Mammary epithelial cell (primary cell): ENCODE measurements at regions of chr5 and their contacts with region 1.

Region 1: DNA sequence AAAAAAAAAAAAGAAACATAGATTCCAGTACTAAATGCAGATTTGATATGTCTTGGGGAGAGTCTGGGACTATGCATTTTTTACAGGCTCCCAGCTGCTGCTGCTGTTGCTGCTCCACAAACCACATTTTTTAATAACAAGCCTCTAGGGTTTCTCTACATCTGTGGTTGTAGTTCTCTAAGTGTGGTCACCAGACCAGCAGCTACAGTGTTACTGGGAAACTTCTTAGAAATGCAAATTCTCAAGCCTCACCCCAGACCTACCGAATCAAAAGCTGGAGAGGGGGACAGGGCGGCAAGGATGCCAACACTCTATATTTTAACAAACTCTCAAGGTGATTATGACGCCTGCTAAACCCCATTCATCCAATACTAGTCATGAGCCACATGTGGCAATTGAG is 293.4 kb upstream of the PTGER4 start:
- DNase-seq: peak; percentile 26
- H3K4me3 ChIP-seq: no peak overlapping the region
- H3K27ac ChIP-seq: no peak overlapping the region
- H3K4me1 ChIP-seq: peaks cover 49% of the 10 kb centered on the region
- H3K27me3 ChIP-seq: no peaks in the 10 kb centered on the region
- CTCF ChIP-seq: no peak

Region 2: GRCh38 chr5:39948867-39949468 is 437.3 kb before region 1 on chr5:
- CTCF ChIA-PET with region 1: no interaction called
- dilution Hi-C with region 1: no loop called
- in situ Hi-C with region 1: no loop called
- intact Hi-C with region 1: loop called (anchors 10 kb)
- DNase-seq: peak; percentile 50
- H3K4me3 ChIP-seq: no peak overlapping the region
- H3K27ac ChIP-seq: no peak overlapping the region
- H3K4me1 ChIP-seq: no peaks in the 10 kb centered on the region
- H3K27me3 ChIP-seq: no peaks in the 10 kb centered on the region
- CTCF ChIP-seq: peak; percentile 62 to 67

Region 3: GRCh38 chr5:40428126-40428525 is 41.8 kb after region 1 on chr5:
- CTCF ChIA-PET with region 1: no interaction called
- dilution Hi-C with region 1: loop called (anchors 5 kb)
- in situ Hi-C with region 1: no loop called
- intact Hi-C with region 1: loop called (anchors 5 kb)
- DNase-seq: peak; percentile 70
- H3K4me3 ChIP-seq: no peak overlapping the region
- H3K27ac ChIP-seq: no peak overlapping the region
- H3K4me1 ChIP-seq: peaks cover 28% of the 10 kb centered on the region
- H3K27me3 ChIP-seq: no peaks in the 10 kb centered on the region
- CTCF ChIP-seq: no peak

Region 4: DNA sequence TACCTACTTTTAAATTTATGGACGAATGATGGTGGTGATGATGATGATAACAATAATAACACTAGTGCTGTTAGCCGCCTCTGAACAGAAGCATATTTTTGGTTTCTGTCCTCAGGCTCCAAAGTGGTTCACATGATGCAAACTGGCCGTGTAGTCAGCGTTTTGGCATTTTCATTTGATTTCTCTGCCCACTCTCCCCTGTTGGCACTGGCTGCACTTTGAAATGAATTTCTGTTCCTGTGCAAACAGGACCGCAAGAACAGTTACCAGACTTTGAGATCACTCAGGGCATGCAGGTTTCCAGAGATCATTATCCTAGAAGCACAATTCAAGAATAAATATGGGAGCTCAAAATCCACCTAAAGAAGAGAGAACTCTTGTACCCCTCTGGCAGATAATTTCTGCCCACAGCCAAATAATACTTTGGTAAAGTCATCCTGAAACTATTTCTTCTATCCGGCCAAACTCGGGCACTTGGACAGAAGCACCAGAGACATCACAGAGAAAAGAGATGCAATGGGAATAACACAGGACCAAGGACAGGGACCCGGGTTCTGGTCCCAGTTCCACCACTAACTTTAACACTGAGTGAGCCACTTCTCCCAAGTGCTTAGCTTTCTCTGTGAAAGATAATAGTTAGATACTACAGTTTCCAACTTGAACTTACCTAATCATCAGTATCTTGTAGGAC is 91.7 kb after region 1 on chr5:
- CTCF ChIA-PET with region 1: no interaction called
- dilution Hi-C with region 1: no loop called
- in situ Hi-C with region 1: no loop called
- intact Hi-C with region 1: loop called (anchors 1 kb)
- DNase-seq: peak; percentile 96
- H3K4me3 ChIP-seq: no peak overlapping the region
- H3K27ac ChIP-seq: peak overlapping the region; percentile 68
- H3K4me1 ChIP-seq: peaks cover 37% of the 10 kb centered on the region
- H3K27me3 ChIP-seq: no peaks in the 10 kb centered on the region
- CTCF ChIP-seq: no peak

Region 5: GRCh38 chr5:40672425-40672824 is 286.1 kb after region 1 on chr5:
- CTCF ChIA-PET with region 1: no interaction called
- dilution Hi-C with region 1: no loop called
- in situ Hi-C with region 1: loop called in 1 of 2 experiments (anchors 10 kb)
- intact Hi-C with region 1: loop called (anchors 1 kb)
- DNase-seq: no peak
- H3K4me3 ChIP-seq: no peak overlapping the region
- H3K27ac ChIP-seq: no peak overlapping the region
- H3K4me1 ChIP-seq: peaks cover 25% of the 10 kb centered on the region
- H3K27me3 ChIP-seq: no peaks in the 10 kb centered on the region
- CTCF ChIP-seq: no peak